Naive thymus-derived CD8-positive, alpha-beta T cell (primary cell): ENCODE measurements at regions of chr3 and their contacts with region 1.

Region 1: DNA sequence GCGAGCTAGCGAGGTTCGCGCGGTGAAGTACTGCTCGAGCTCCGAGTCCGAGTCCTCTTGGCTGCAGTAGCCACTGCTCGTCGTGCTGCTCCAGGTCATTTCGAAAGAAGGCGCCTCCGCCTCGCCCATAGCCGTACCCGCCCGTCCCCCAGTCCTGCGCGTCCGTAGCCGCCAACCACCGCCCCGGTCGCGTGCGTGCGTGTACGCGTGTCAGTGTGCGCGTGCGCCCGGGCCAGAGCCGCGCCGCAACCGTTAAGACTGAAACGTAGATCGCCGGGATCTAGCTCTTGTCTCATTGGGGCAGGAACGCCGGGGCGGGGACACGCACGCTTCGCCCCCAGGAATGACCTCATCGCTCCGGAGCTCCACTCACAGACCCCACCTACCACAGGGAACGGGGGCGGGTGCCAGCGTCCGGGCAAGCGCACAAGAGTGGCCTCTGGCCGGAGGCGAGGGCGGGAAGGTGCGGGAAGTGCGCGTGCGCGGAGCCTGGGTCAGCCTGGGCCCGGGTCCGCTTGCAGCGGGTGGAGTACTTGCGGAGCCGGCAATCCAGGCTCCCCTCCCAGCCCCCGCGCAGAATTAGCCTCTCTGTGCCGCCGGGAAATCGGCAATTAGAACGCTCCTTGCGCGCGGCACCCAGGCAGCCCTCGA is 3.3 kb downstream of the RASSF1 start:
- DNase-seq: peak; percentile 84 to 98 (median 92)
- ATAC-seq: peak; percentile 77 to 78
- H3K4me3 Mint-ChIP-seq: peak overlapping the region; percentile 86 to 98 (median 94)
- H3K27ac Mint-ChIP-seq: peak overlapping the region; percentile 94 to 99 (median 96)
- H3K4me1 Mint-ChIP-seq: peaks cover 34 to 79% (median 74%) of the 10 kb centered on the region in 4 donors
- H3K27me3 Mint-ChIP-seq: no peaks in the 10 kb centered on the region

Region 2: DNA sequence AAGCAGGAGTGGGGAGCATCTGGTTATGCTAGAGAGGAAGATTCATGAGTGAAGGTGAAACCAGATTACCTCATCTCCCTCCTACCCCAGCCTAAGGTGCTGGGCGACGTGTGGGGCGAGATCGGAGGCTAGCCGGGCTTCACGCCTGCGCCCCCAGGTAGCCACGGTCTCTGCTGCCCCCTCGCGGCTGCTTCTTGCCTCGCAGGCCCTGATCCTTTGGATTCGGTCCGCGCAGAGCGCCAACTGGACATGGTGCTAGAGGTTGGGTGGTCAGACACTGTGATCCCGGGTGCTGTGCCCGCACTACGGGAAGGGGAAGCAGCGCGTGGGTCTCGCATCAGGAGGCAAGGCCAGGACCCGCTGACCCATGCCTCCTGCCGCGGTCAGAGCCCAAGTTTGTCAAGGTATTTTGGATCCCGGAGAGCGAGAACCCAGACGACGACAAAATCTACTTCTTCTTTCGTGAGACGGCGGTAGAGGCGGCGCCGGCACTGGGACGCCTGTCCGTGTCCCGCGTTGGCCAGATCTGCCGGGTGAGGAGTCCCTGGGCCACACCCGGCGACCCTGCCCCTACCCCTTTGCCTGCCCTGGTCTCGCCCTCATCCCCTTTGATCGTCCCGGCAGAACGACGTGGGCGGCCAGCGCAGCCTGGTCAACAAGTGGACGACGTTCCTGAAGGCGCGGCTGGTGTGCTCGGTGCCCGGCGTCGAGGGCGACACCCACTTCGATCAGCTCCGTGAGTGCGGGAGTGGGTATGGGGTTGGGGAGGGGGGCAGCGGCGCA is 64.2 kb before region 1 on chr3:
- POLR2A ChIA-PET with region 1: no interaction called
- DNase-seq: peak; percentile 65 to 90 (median 82)
- ATAC-seq: peak; percentile 84 to 87
- H3K4me3 Mint-ChIP-seq: peak overlapping the region in 9 of 10 donors; percentile 52 to 84 (median 72)
- H3K27ac Mint-ChIP-seq: peak overlapping the region in 6 of 10 donors; percentile 37 to 79 (median 72)
- H3K4me1 Mint-ChIP-seq: peaks cover 16 to 29% (median 27%) of the 10 kb centered on the region in 4 donors
- H3K27me3 Mint-ChIP-seq: peaks cover 13 to 55% (median 25%) of the 10 kb centered on the region in 5 donors

Region 3: GRCh38 chr3:50292159-50293078 is 44.9 kb before region 1 on chr3 and contains the start of gene IFRD2:
- POLR2A ChIA-PET with region 1: interaction called, 26 read pairs
- DNase-seq: peak; percentile 87 to 97 (median 94)
- ATAC-seq: peak; percentile 98 to 99
- H3K4me3 Mint-ChIP-seq: peak within 1 kb of the TSS; percentile 82 to 95 (median 90)
- H3K27ac Mint-ChIP-seq: peak within 1 kb of the TSS; percentile 93 to 99 (median 98)
- H3K4me1 Mint-ChIP-seq: peaks cover 16 to 31% (median 18%) of the 10 kb centered on the region in 4 donors
- H3K27me3 Mint-ChIP-seq: no peaks in the 10 kb centered on the region
- polyA plus RNA-seq, gene IFRD2: 59.4 to 69.7 (median 60.7) TPM

Region 4: DNA sequence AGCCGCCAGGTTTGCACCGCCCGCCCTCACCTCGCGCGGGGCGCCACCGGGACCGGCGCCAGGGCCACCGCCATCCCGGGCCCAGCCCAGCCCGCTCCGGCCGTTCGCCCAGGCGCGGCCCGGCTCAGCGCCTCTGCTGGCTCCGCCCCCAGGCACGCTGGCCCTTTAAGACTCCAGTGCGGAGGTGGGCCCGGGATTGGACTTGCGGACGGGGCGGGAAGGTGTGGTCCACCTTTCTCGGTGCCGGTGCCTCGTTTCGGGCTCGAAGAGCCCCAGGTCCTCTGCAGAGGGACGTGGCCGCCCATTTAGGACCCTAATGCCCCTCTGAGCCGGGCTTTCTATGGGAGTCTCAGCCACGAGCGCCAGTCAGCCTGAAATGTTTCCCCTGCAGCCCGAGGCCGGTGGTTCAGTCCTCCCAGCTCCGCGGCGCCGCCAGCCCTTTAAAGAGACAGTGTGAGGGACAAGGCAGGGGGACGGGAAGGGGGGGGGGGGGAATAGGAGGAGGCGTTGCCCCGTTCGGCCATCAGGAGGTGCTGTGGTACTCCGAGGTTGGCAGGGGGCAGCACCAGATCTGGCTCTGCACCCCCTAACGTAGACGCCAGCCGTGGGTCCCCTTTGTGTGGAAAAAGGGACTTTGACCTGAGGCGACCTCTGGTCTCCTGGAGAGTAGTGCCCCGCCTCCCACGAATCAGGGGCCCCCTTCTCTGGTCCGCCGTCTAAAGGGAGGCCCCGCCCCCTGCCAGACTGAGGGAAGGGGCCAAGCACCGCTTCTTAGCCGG is 15.8 kb before region 1 on chr3:
- POLR2A ChIA-PET with region 1: interaction called, 53 read pairs
- DNase-seq: peak; percentile 70 to 90 (median 78)
- ATAC-seq: peak; percentile 74 to 78
- H3K4me3 Mint-ChIP-seq: peak overlapping the region; percentile 79 to 92 (median 86)
- H3K27ac Mint-ChIP-seq: peak overlapping the region; percentile 73 to 97 (median 93)
- H3K4me1 Mint-ChIP-seq: peaks cover 18 to 56% (median 45%) of the 10 kb centered on the region in 4 donors
- H3K27me3 Mint-ChIP-seq: no peaks in the 10 kb centered on the region

Region 5: GRCh38 chr3:50358911-50359759 is 21.8 kb after region 1 on chr3 and contains the start of gene TMEM115:
- POLR2A ChIA-PET with region 1: interaction called, 318 read pairs
- DNase-seq: peak; percentile 86 to 98 (median 94)
- ATAC-seq: peak; percentile 99 to 100
- H3K4me3 Mint-ChIP-seq: peak within 1 kb of the TSS; percentile 89 to 99 (median 96)
- H3K27ac Mint-ChIP-seq: peak within 1 kb of the TSS; percentile 87 to 98 (median 96)
- H3K4me1 Mint-ChIP-seq: peaks cover 25 to 58% (median 46%) of the 10 kb centered on the region in 4 donors
- H3K27me3 Mint-ChIP-seq: no peaks in the 10 kb centered on the region
- polyA plus RNA-seq, gene TMEM115: 15.2 to 29.2 (median 20.3) TPM